ENCODE measurements at regions of chr7 and their contacts with region 1.

Region 1: GRCh38 chr7:74206589-74207120 is 3.2 kb upstream of the LAT2 start:
- DNase-seq: peak; percentile 90
- ATAC-seq: peak; percentile 88 to 92
- H3K4me3 ChIP-seq: peak overlapping the region; percentile 41
- H3K27ac ChIP-seq: no peak overlapping the region
- H3K4me1 ChIP-seq: peaks cover 15% of the 10 kb centered on the region
- H3K27me3 ChIP-seq: no peaks in the 10 kb centered on the region
- CTCF ChIP-seq: peak; percentile 99

Region 2: GRCh38 chr7:74401137-74401859 is 194.6 kb after region 1 on chr7:
- intact Hi-C with region 1: loop called (anchors 10 kb)
- DNase-seq: peak; percentile 72
- ATAC-seq: peak; percentile 72 to 81
- H3K4me3 ChIP-seq: no peak overlapping the region
- H3K27ac ChIP-seq: no peak overlapping the region
- H3K4me1 ChIP-seq: no peaks in the 10 kb centered on the region
- H3K27me3 ChIP-seq: no peaks in the 10 kb centered on the region
- CTCF ChIP-seq: peak; percentile 98

Measured in lower lobe of right lung (tissue), 2 donors.